ENCODE measurements at regions of chr12 and their contacts with region 1.

Region 1: DNA sequence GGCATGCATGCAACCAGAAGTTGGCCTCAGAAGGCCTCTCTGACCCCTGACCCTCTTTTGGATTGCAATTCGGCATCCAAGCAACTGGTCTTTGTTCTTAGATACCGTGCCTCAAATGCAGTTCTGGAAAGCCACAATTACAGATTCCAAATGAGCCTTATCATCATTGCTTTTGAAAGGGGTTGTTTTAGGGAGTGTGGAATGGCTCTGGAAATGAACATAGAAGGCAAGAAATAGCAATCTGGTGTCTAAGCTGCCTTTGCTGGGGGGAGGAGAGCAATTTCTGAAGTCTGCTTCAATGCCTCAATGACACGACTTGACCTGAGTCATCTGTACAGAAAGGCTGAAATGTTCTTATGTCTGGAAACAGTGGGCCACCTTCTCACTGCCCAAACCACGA is 250.1 kb downstream of the NUAK1 start:
- DNase-seq: no peak
- H3K4me3 ChIP-seq: no peak overlapping the region
- CTCF ChIP-seq: no peak
- POLR2A ChIP-seq: no peak

Region 2: DNA sequence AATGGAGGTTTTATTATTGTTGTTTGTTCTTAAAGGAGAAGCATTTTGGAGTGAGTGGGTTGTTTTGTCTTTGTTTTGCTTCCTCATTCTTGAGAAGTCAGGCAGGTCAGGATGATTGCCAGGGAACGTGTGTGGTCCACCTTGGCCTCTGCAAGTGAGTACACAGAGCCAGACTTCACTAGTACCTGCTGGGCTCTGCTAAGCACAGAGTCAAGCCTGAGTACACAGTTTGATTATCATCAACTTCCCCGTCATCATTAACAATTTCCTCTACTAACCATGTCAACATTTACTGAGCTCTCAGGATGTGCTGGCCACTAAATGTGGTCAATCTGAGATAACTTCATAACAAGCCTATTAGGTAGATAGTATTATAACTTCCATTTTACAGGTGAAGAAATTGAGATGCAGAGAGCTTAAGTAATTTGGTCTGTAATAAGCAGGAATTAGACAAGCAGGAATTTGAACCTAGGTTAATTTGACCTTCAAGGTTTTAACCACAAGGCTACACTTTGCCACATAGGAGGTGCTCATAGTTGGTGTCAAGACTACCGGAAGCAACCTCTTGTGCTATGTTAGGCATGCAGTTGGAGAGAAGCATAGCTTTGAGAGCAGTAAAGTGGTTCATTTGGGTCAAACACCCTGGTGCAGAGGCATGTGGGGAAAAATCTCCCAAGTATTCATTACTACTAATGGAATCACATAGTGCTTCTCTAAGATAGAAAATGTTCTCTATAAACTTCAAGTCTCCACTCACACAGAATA is 71.8 kb after region 1 on chr12:
- intact Hi-C with region 1: loop called (anchors 2 kb)
- DNase-seq: no peak
- H3K4me3 ChIP-seq: no peak overlapping the region
- CTCF ChIP-seq: no peak
- POLR2A ChIP-seq: no peak

Measured in lower leg skin (tissue), 4 donors.